ENCODE measurements at regions of chr6 and their contacts with region 1.

Region 1: GRCh38 chr6:28489366-28490204 is 26.0 kb downstream of the GPX6 start:
- DNase-seq: peak; percentile 80
- ATAC-seq: peak; percentile 80
- H3K4me3 Mint-ChIP-seq: peak overlapping the region; percentile 72
- H3K27ac Mint-ChIP-seq: peak overlapping the region; percentile 79
- H3K4me1 Mint-ChIP-seq: peaks cover 16% of the 10 kb centered on the region
- H3K27me3 Mint-ChIP-seq: peaks cover 44% of the 10 kb centered on the region

Region 2: GRCh38 chr6:28458564-28458963 is 31.0 kb before region 1 on chr6:
- CTCF ChIA-PET with region 1: no interaction called
- POLR2A ChIA-PET with region 1: no interaction called
- intact Hi-C with region 1: no loop called
- DNase-seq: no peak
- ATAC-seq: no peak
- H3K4me3 Mint-ChIP-seq: no peak overlapping the region
- H3K27ac Mint-ChIP-seq: no peak overlapping the region
- H3K4me1 Mint-ChIP-seq: peaks cover 7% of the 10 kb centered on the region
- H3K27me3 Mint-ChIP-seq: peaks cover 46% of the 10 kb centered on the region

Region 3: DNA sequence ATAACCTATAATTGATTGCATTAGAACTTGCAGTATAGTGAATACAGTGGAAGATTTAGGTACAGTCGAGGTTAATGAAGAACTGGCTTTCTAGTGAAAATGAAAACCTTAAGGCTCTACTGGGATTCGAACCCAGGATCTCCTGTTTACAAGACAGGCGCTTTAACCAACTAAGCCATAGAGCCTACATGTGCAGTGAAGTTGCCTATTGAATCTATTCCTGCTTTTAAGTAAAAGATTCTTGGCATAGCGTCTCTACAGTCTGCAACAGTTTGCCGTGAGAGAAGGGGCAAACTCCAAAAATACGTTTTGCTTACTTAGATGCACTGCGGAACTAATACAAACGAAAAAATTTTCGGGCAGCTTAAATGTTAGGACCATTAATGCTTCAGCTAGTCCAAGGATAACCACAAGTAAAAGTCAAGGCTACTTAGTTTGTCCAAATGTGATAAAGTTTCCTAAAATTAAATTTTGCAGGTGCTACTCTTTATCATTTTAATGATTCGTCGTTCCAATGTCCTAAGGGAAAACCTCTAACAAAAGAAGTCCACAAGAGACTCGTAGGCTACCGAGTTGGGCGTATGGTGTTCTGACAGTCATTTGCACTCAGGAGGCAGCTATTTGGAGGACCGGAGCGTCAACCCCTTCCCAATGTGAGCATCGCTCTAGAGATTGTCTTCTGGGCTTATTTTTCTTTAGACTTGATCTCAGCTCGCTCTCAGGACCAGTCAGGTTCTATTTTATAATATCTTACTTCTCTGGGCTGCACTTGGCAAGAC is 15.0 kb before region 1 on chr6:
- CTCF ChIA-PET with region 1: no interaction called
- POLR2A ChIA-PET with region 1: no interaction called
- intact Hi-C with region 1: loop called in 1 of 2 experiments (anchors 2 kb)
- DNase-seq: peak; percentile 39
- ATAC-seq: peak; percentile 88
- H3K4me3 Mint-ChIP-seq: peak overlapping the region; percentile 59
- H3K27ac Mint-ChIP-seq: no peak overlapping the region
- H3K4me1 Mint-ChIP-seq: peaks cover 11% of the 10 kb centered on the region
- H3K27me3 Mint-ChIP-seq: peaks cover 41% of the 10 kb centered on the region

Region 4: DNA sequence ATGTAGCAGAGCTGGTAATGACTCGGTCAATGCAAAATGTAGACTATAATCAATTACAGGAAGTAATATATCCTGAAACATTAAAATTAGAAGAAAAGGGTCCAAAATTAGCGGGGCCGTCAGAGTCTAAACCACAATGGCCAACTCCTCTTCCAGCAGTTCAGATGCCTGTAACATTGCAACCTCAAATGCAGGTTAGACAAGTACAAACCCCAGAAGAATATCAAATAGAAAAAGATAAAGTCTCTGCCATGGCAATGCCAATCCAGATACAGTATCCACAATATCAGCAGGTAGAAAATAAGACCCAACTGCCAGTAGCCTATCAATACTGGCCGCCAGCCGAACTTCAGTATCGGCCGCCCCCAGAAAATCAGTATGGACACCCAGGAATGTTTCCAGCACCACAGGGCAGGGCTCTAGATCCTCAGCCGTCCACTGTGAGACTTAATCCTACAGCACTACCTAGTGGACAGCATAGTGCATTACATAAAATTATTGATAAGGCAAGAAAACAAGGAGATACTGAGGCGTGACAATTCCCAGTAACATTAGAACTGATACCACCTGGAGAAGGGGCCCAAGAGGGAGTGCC is 194.5 kb after region 1 on chr6:
- CTCF ChIA-PET with region 1: no interaction called
- POLR2A ChIA-PET with region 1: no interaction called
- intact Hi-C with region 1: loop called in 1 of 2 experiments (anchors 2 kb)
- DNase-seq: peak; percentile 13
- ATAC-seq: peak; percentile 53
- H3K4me3 Mint-ChIP-seq: no peak overlapping the region
- H3K27ac Mint-ChIP-seq: no peak overlapping the region
- H3K4me1 Mint-ChIP-seq: peaks cover 6% of the 10 kb centered on the region
- H3K27me3 Mint-ChIP-seq: peaks cover 54% of the 10 kb centered on the region

Region 5: GRCh38 chr6:28880894-28881780 is 391.6 kb after region 1 on chr6:
- CTCF ChIA-PET with region 1: no interaction called
- POLR2A ChIA-PET with region 1: no interaction called
- intact Hi-C with region 1: no loop called
- DNase-seq: peak; percentile 79
- ATAC-seq: no peak
- H3K4me3 Mint-ChIP-seq: peak overlapping the region; percentile 57
- H3K27ac Mint-ChIP-seq: peak overlapping the region; percentile 69
- H3K4me1 Mint-ChIP-seq: peaks cover 29% of the 10 kb centered on the region
- H3K27me3 Mint-ChIP-seq: peaks cover 3% of the 10 kb centered on the region

Measured in activated CD4-positive, alpha-beta T cell treated with anti-CD3 and anti-CD28 coated beads for 36 hours (primary cell).